PC-9 (cell line): ENCODE measurements at regions of chr3 and their contacts with region 1.

Region 1: GRCh38 chr3:108053067-108053466 is 37.8 kb downstream of the CD47 start:
- DNase-seq: peak; percentile 73 to 76
- H3K4me3 ChIP-seq: no peak overlapping the region
- H3K27ac ChIP-seq: 0 out of 2 replicates have a peak overlapping the region, but pooled peaks have one; percentile 0
- H3K4me1 ChIP-seq: peaks cover 13% of the 10 kb centered on the region
- H3K27me3 ChIP-seq: no peaks in the 10 kb centered on the region
- CTCF ChIP-seq: no peak

Region 2: GRCh38 chr3:107999215-107999775 is 53.8 kb before region 1 on chr3:
- CTCF ChIA-PET with region 1: no interaction called
- POLR2A ChIA-PET with region 1: no interaction called
- intact Hi-C with region 1: loop called (anchors 5 kb)
- DNase-seq: peak; percentile 82 to 99
- H3K4me3 ChIP-seq: no peak overlapping the region
- H3K27ac ChIP-seq: peak overlapping the region; percentile 77
- H3K4me1 ChIP-seq: peaks cover 71% of the 10 kb centered on the region
- H3K27me3 ChIP-seq: no peaks in the 10 kb centered on the region
- CTCF ChIP-seq: 0 out of 2 replicates have a peak, but pooled peaks have one; percentile 32

Region 3: DNA sequence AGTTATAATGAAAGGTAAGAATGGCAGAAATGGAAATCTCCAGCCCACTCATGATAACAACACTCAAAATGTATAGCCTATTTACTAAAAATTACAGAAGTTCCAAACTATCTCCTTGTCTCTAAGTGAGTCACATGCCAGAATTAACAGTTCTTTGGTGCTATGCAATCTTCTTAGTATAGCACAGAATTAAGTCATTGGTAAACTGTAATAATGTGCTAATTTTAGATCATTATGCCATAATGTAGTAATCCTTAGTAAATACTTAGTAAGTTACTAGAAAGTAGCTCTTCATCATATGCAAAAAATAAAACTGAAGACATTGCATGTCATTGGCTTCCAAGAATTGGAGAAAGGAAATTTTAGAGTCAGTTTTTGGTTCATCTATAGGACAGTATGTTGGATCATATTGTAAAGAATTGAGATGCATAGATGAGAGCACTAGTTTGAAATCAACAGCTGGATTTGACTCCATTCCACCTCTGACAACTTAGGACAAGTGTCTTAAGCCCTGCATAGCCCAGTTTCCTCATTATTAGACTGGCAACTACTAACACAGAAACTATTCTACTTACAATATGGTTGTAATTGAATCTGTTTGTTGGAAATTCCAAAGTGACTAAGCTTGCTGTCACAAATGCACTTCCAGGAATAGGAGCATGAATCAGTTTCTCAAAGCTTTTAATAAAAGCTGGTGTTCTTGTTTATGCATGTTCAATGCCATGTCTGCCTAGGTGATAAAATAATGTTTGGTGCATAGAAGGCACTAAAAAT is 77.8 kb after region 1 on chr3:
- CTCF ChIA-PET with region 1: no interaction called
- POLR2A ChIA-PET with region 1: no interaction called
- intact Hi-C with region 1: loop called (anchors 5 kb)
- DNase-seq: peak; percentile 15 to 99
- H3K4me3 ChIP-seq: no peak overlapping the region
- H3K27ac ChIP-seq: peak overlapping the region; percentile 84
- H3K4me1 ChIP-seq: peaks cover 46% of the 10 kb centered on the region
- H3K27me3 ChIP-seq: no peaks in the 10 kb centered on the region
- CTCF ChIP-seq: no peak